PC-9 (cell line): ENCODE measurements at regions of chr12 and their contacts with region 1.

Region 1: DNA sequence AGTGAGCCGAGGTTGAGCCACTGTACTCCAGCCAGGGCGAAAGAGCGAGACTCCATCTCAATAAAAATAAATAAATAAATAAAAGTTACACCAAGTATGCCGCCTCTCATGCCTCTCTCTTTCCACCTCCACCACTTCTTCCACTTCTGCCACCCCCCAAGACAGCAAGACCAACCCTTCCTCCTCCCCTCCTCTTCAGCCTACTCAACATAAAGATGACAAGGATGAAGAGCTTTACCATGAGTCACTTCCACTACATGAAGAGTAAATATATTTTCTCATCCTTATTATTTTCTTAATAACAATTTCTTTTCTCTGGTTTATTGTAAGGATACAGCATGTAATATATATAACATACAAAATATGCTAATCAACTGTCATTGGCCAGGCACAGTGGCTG is 3.6 kb upstream of the TMED2 start:
- DNase-seq: no peak
- H3K4me3 ChIP-seq: no peak overlapping the region
- H3K27ac ChIP-seq: no peak overlapping the region
- H3K4me1 ChIP-seq: peaks cover 12% of the 10 kb centered on the region
- H3K27me3 ChIP-seq: no peaks in the 10 kb centered on the region
- CTCF ChIP-seq: no peak

Region 2: GRCh38 chr12:121980191-121980891 is 1600.4 kb before region 1 on chr12:
- CTCF ChIA-PET with region 1: no interaction called
- POLR2A ChIA-PET with region 1: no interaction called
- intact Hi-C with region 1: no loop called
- DNase-seq: no peak
- H3K4me3 ChIP-seq: no peak overlapping the region
- H3K27ac ChIP-seq: no peak overlapping the region
- H3K4me1 ChIP-seq: no peaks in the 10 kb centered on the region
- H3K27me3 ChIP-seq: no peaks in the 10 kb centered on the region
- CTCF ChIP-seq: no peak

Region 3: DNA sequence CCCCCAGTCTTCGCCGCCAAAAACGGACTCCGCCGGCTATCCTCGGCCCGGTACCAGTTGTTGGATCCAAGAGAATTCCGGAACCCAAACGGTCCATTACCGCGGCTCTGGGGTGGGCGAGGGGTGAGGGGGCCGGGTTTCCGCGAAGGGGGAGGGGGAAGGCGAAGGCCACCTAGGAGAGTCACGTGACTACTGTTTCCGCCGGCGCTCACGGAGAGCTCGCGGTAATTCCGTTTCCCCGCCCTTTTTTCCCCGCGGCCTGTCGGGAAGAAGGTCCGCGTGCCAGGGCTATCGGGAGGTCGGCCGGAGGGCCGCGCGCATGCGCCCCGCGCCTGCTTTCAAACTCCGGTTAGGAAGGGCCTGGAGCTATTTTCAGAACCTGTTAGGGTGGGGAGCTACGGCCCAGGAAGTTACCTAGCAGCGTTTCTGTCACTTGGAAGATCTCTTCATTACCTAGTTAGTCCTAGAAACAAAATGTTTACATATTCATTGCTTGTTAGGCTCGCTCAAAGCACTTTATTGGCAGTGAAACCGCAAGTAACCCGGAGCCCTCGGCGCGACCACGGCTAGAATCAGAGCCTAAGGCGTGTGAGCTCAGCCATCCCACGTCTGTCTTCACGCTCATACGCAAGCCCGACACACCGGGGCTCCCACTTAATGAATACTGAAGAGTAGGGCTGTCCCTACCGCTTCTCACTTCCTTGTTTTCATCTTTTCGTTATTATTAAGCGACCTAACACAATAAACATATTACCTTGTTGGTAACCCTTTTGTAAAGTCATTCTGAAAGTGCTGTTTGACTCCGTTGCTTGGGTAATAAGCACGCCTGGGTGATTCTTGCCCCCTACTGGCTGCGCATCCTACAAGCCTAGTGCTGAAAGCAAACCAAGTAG is 215.5 kb before region 1 on chr12:
- CTCF ChIA-PET with region 1: no interaction called
- POLR2A ChIA-PET with region 1: no interaction called
- intact Hi-C with region 1: loop called (anchors 2 kb)
- DNase-seq: peak; percentile 96 to 98
- H3K4me3 ChIP-seq: peak overlapping the region; percentile 82
- H3K27ac ChIP-seq: peak overlapping the region; percentile 95
- H3K4me1 ChIP-seq: peaks cover 14% of the 10 kb centered on the region
- H3K27me3 ChIP-seq: no peaks in the 10 kb centered on the region
- CTCF ChIP-seq: peak; percentile 74

Region 4: GRCh38 chr12:123388177-123388947 is 192.4 kb before region 1 on chr12:
- CTCF ChIA-PET with region 1: interaction called, 4 read pairs
- POLR2A ChIA-PET with region 1: no interaction called
- intact Hi-C with region 1: loop called (anchors 5 kb)
- DNase-seq: peak; percentile 49 to 74
- H3K4me3 ChIP-seq: peak overlapping the region; percentile 80
- H3K27ac ChIP-seq: 0 out of 2 replicates have a peak overlapping the region, but pooled peaks have one; percentile 35
- H3K4me1 ChIP-seq: peaks cover 30% of the 10 kb centered on the region
- H3K27me3 ChIP-seq: no peaks in the 10 kb centered on the region
- CTCF ChIP-seq: no peak

Region 5: GRCh38 chr12:123436017-123436964 is 144.5 kb before region 1 on chr12 and contains the start of gene RILPL2:
- CTCF ChIA-PET with region 1: no interaction called
- POLR2A ChIA-PET with region 1: no interaction called
- intact Hi-C with region 1: loop called (anchors 5 kb)
- DNase-seq: peak; percentile 66 to 89
- H3K4me3 ChIP-seq: peak within 1 kb of the TSS; percentile 58
- H3K27ac ChIP-seq: no peak within 1 kb of the TSS
- H3K4me1 ChIP-seq: 0 out of 2 replicates have a peak, but pooled peaks cover 4% of the 10 kb centered on the region
- H3K27me3 ChIP-seq: no peaks in the 10 kb centered on the region
- CTCF ChIP-seq: no peak
- total RNA-seq, gene RILPL2: 3.6 and 4.3 TPM in 2 replicates

Region 6: DNA sequence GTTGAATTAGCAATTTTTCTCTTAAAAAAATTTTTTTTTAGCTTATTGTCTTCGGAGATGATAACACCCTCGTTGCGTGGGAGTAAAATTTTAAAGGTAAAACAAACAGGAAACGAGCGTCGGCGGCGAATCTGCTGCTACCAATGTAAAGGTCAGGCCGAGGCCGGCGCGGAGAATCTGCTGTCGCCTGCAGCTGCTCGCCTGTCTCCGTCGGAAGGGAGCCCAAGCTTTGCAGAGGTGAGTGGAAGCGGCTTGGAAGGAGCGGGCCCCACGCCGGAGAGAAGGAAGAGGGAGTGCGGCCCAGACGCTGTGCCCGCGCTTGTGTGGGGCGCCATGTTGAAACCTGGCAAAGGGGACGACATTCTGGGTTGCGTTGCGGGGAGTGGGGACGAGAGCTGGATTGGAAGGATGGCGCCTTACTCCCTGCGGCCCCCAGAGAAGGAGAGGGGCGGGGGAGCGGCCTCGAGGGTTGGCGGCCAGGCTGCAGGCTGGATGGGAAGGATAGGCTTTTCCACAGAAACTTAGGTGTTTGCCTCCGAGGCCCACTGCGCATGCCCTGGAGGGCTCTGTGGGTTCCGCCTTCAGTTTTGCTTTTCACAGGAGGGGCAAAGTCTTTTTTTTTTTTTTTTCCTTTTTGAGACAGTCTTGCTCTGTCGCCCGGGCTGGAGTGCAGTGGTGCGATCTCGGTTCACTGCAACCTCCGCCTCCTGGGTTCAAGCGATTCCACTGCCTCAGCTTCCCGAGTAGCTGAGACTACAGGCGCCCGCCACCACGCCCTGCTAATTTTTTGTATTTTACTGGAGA is 122.6 kb before region 1 on chr12 and contains the start of gene SNRNP35:
- CTCF ChIA-PET with region 1: no interaction called
- POLR2A ChIA-PET with region 1: no interaction called
- intact Hi-C with region 1: loop called (anchors 5 kb)
- DNase-seq: peak; percentile 56 to 78
- H3K4me3 ChIP-seq: peak within 1 kb of the TSS; percentile 89
- H3K27ac ChIP-seq: peak within 1 kb of the TSS; percentile 99
- H3K4me1 ChIP-seq: 0 out of 2 replicates have a peak, but pooled peaks cover 6% of the 10 kb centered on the region
- H3K27me3 ChIP-seq: no peaks in the 10 kb centered on the region
- CTCF ChIP-seq: no peak
- total RNA-seq, gene SNRNP35: 24.3 and 28.6 TPM in 2 replicates

Region 7: DNA sequence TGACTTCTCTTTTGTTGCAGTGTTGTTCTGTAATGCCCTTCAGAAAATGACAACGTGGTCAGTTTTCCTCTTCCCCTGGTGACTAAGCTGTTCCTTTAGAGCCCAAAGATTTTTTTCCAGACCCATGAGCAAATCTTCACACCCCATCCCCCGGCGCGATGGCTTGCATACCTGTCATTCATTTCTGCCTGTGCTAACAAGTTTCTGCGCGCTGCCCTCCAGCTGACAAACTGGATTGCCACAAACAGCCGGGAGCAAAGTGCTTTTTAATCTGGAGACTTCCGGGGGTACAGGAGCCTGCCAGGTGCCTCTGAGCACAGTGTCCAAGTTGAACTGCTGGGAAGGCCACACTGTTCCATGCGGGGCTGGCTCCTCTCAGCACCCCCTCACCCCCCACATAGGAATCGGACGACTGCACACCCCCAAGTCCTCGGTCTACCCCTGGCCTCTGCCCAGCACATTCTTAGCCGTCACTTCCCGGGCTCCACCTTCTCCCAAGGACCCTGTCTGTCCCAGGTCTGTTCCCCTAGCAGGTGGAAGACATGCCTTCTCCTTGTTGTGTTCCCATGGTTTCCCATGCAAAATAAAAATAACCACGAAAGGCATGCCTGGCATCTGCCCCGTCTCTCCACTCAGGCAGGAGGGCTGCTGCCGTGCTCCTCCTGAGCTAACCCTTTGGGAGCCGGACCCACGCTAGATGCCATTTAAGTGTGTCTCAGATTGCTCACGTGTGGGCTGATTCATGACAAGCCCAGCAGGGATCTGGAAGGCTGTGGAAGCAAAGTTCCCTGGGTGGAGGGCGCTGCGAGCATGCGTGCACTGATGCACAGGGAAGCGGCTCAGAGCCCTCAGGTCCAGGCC is 61.4 kb before region 1 on chr12:
- CTCF ChIA-PET with region 1: no interaction called
- POLR2A ChIA-PET with region 1: no interaction called
- intact Hi-C with region 1: loop called (anchors 1 kb)
- DNase-seq: peak; percentile 92 to 95
- H3K4me3 ChIP-seq: no peak overlapping the region
- H3K27ac ChIP-seq: peak overlapping the region; percentile 53
- H3K4me1 ChIP-seq: peaks cover 20% of the 10 kb centered on the region
- H3K27me3 ChIP-seq: no peaks in the 10 kb centered on the region
- CTCF ChIP-seq: no peak

Region 8: GRCh38 chr12:123533672-123534643 is 46.8 kb before region 1 on chr12 and contains the start of gene RILPL1:
- CTCF ChIA-PET with region 1: no interaction called
- POLR2A ChIA-PET with region 1: no interaction called
- intact Hi-C with region 1: loop called (anchors 5 kb)
- DNase-seq: peak; percentile 45 to 57
- H3K4me3 ChIP-seq: peak within 1 kb of the TSS; percentile 87
- H3K27ac ChIP-seq: no peak within 1 kb of the TSS
- H3K4me1 ChIP-seq: peaks cover 11% of the 10 kb centered on the region; the same call in 1 of the 2 replicates
- H3K27me3 ChIP-seq: no peaks in the 10 kb centered on the region
- CTCF ChIP-seq: no peak
- total RNA-seq, gene RILPL1: 11.5 and 15.3 TPM in 2 replicates